Ovary (tissue), 10 donors: ENCODE measurements at regions of chr6 and their contacts with region 1.

Region 1: DNA sequence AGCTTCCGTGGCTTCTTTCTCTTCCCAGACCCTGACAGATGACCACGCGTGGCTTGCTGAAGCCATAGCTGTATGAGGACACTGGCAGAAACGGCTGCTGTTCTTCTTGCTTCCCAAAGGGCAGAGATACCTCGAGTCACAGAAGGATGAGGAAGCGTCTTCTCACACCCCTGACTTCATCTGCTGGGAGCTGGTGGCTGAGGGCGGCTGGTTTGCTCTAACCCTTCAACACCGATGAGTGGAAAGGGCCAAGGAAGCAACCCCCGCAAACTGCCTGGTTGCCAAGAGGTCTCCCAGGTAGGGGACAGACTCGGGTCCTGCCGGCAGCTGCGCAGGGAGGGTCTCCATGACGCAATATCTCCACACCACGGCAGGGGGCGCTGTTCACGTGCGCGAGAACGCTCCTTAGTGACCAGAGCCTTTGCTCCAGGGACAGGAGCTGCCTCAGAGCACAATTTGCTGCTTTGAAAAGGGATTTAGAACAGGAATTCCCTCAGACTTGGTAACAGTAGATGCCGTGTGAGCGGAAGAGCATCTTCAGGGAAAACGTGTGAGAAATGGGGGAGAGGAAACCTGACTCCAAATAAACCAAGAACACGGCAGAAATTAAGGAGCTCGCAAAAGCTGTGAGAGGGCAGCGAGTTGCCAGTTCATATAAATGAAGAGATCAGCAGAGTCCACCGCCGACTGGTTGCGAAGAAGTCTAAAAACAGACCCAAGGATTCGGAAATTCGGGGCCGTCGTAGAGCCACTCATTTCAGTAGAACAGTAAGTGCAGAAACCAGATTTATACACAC is 80.2 kb downstream of the ERMARD start:
- DNase-seq: peak; percentile 68 to 87 (median 85)
- H3K4me3 ChIP-seq: no peak overlapping the region
- H3K27ac ChIP-seq: peak overlapping the region in 1 of 2 donors; percentile 18
- H3K4me1 ChIP-seq: no peaks in the 10 kb centered on the region
- H3K27me3 ChIP-seq: no peaks in the 10 kb centered on the region
- CTCF ChIP-seq: peak; percentile 77 to 90 (median 89)
- EP300 ChIP-seq: no peak
- POLR2A ChIP-seq: no peak

Region 2: DNA sequence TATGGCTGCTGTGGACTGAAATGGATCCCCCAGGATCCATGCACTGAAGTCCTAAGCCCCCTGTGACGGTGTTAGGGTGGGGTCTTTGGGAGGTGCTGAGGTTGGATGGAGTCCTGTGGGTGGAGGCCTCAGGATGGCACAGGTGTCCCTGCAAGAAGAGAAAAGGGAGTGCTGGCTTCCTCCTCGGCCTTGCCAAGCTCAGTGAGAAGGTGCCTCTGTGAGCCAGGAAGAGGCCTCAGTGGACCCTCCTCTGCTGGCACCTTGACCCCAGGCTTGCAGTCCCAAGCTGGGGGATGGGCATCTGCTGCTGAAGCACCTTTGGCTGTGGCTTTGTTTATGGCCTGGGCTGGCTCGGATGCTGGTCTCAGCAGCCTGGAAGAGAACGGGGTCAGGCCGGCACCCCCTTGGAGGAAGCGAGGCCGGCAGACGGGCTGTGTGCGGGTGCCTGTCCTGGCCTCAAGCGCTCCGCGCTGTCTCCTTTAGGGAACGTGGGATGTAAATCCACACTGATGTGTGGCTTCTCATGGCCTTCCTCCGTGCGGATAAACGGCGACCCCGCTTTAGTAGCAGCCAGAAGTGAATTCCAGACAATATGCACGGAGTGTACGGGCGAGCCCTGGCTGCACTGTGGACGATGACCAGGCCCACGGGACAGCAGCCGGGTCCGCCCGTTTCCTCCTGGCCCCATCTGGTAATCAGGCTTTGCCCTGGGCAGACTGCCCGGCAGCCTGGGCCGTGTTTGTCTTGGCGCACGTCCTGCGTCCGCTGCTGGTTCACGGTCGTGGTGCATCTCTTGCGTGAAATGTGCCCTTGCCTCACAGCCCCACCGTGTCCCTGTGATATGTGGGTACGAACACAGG is 102.4 kb after region 1 on chr6:
- intact Hi-C with region 1: loop called in 1 of 4 experiments (anchors 10 kb)
- DNase-seq: peak; percentile 75 to 92 (median 86)
- H3K4me3 ChIP-seq: no peak overlapping the region
- H3K27ac ChIP-seq: no peak overlapping the region
- H3K4me1 ChIP-seq: peaks cover 17% of the 10 kb centered on the region
- H3K27me3 ChIP-seq: no peaks in the 10 kb centered on the region
- CTCF ChIP-seq: no peak
- EP300 ChIP-seq: no peak
- POLR2A ChIP-seq: no peak

Region 3: GRCh38 chr6:170114956-170115855 is 283.6 kb after region 1 on chr6:
- intact Hi-C with region 1: no loop called
- DNase-seq: peak in 4 of 5 donors; percentile 35 to 97 (median 85)
- H3K4me3 ChIP-seq: no peak overlapping the region
- H3K27ac ChIP-seq: no peak overlapping the region
- H3K4me1 ChIP-seq: peaks cover 3% of the 10 kb centered on the region
- H3K27me3 ChIP-seq: no peaks in the 10 kb centered on the region
- CTCF ChIP-seq: no peak
- EP300 ChIP-seq: no peak
- POLR2A ChIP-seq: no peak

Region 4: DNA sequence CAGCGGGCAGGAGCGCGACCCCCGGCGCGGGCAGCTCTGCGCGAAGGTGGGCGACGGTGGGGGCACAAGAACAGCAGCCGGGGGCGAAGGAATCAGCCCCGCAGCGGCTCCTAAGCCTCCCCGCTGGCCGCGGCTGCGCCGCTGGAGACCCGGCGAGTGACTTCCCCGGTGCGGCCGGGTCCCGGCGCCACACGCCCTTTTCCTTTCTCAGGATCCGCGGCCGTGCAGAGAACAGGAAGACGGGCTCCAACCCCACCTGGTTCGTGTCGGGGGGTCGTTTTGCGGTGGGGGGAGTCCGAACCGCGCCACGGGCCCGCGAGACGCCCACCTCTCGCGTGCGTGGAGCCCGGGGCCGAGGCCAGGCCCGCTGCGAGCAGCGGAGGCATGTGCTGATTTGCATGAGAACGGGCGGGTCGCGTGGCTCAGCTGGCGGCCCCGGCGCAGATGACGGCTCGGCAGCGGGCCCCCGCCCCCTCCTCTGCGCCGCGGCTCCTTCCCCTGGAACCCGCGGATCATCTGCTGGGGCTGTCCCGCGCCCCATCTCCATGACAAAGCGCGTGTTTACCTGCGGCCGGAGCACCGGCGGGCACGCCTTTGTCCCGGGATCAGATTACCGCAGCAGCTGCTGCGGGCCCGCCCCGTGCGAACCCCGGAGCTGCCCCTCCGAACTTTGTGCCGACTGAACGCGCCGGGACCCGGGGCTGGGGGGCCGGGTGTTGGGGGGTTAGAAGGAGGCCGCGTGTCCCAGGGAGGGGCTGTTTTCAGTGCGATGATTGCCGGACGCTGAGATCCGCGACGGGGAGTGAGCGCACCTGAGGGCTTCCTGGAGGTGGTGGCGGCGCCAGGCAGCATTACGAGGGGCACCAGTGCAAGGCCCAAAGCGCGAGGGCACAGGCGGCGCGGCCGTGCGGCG is 464.1 kb after region 1 on chr6:
- intact Hi-C with region 1: loop called in 1 of 4 experiments (anchors 10 kb)
- DNase-seq: peak in 1 of 5 donors; percentile 16
- H3K4me3 ChIP-seq: peak overlapping the region; percentile 21
- H3K27ac ChIP-seq: no peak overlapping the region
- H3K4me1 ChIP-seq: peaks cover 21% of the 10 kb centered on the region
- H3K27me3 ChIP-seq: peaks cover 3% of the 10 kb centered on the region
- CTCF ChIP-seq: no peak
- EP300 ChIP-seq: no peak
- POLR2A ChIP-seq: no peak

Region 5: DNA sequence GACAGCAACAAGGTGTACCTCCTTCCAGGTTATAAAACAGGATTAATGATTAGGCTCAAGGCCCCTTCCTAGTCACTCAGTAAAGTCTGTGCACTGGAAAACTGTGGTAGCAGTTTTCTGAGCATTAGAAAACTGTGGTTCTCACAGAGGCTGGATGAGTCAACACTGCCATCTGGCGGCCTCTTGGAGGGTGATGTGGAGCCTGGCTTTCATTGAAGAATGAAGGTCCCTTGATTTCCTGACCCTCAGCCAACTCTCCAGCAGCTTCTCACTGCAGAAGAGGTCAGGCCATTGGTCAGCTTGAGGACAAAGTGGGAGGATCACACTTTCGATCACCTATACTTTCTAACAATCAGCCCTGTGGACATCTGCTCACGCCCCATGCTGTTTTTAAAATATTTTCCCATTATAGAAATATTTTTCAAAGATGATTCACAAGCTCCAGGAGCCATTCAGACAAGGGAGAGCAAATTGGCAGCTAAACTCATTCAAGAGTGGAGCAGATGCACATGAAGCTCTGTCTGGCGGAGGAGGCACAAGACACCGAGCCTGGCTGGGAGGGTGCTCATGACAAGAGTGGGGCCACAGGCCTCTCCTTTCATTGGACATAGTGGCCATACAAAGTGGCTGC is 698.3 kb after region 1 on chr6:
- intact Hi-C with region 1: loop called in 2 of 4 experiments (anchors 5 to 10 kb)
- DNase-seq: peak; percentile 69 to 86 (median 80)
- H3K4me3 ChIP-seq: no peak overlapping the region
- H3K27ac ChIP-seq: no peak overlapping the region
- H3K4me1 ChIP-seq: no peaks in the 10 kb centered on the region
- H3K27me3 ChIP-seq: no peaks in the 10 kb centered on the region
- CTCF ChIP-seq: peak; percentile 71 to 93 (median 78)
- EP300 ChIP-seq: no peak
- POLR2A ChIP-seq: no peak